ENCODE measurements at regions of chr3 and their contacts with region 1.

Region 1: DNA sequence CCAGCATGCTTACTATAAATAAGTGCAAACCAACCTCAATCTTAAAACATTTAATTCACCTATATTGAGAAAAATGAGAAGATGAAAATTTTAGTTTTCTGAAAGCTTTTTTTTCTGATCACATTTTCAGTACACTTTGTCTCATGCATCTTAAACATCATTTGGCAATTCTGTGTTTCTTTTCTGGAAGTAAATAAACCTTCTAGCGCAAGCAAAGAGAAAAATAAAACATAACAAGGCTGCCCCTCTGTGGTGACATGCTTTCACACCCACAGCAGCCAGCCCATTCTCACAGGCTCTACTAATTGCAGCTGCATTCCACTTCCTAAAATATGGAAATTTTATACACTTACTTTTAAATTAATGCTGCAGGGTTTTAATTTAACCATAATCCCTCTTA is 90.1 kb downstream of the NEK10 start:
- DNase-seq: no peak
- ATAC-seq: no peak

Region 2: DNA sequence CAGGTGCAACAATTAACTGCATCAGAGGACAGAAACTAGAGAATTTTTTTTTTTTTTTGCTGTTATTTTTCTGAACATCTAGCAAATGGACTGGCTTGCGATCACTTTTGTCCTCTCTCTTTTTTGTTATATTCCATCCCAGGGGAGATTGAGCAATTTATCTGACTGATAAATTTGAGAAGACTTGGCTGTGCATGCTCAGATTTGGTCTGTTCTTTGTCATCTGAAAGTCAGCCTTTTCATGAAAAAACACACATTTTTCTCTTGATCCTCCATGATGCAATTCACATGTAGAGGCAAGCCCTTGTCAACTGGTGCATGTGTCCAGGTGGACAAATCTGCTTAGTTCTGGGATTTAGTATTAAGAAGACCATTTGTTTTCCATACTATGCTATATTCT is 347.2 kb before region 1 on chr3:
- intact Hi-C with region 1: no loop called
- DNase-seq: no peak
- ATAC-seq: no peak

Region 3: GRCh38 chr3:26989037-26989436 is 290.1 kb before region 1 on chr3:
- intact Hi-C with region 1: no loop called
- DNase-seq: no peak
- ATAC-seq: no peak

Region 4: GRCh38 chr3:27134165-27134796 is 144.8 kb before region 1 on chr3:
- intact Hi-C with region 1: loop called (anchors 10 kb)
- DNase-seq: peak; percentile 78
- ATAC-seq: peak; percentile 83